ENCODE measurements at regions of chr3 and their contacts with region 1.

Region 1: GRCh38 chr3:150227839-150228238 is 180.3 kb upstream of the TSC22D2 start:
- DNase-seq: peak; percentile 54
- CTCF ChIP-seq: peak; percentile 57

Region 2: GRCh38 chr3:149245738-149246451 is 981.9 kb before region 1 on chr3:
- in situ Hi-C with region 1: no loop called
- DNase-seq: peak; percentile 34
- CTCF ChIP-seq: no peak

Region 3: DNA sequence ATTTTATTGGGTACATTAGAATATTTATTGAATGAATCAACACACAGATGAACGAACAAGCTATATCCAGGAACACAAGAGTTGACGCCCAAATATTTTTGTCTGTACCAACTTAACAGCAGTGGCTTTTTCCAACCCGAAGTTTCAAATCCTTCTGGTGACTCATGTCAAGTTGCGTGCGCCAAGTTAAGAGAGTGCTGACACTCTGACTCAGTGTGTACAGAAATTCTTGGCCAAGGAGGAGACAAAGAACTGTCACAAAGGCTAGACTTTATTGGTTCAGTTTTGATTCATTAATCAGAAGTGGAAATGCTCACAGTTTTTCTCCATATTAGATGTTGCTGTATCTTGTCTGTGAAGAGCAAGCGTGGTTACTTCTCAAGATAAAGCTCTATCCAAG is 120.7 kb after region 1 on chr3:
- in situ Hi-C with region 1: no loop called
- DNase-seq: no peak
- CTCF ChIP-seq: no peak

Region 4: GRCh38 chr3:150371741-150372254 is 144.0 kb after region 1 on chr3:
- in situ Hi-C with region 1: no loop called
- DNase-seq: no peak
- CTCF ChIP-seq: no peak

Region 5: DNA sequence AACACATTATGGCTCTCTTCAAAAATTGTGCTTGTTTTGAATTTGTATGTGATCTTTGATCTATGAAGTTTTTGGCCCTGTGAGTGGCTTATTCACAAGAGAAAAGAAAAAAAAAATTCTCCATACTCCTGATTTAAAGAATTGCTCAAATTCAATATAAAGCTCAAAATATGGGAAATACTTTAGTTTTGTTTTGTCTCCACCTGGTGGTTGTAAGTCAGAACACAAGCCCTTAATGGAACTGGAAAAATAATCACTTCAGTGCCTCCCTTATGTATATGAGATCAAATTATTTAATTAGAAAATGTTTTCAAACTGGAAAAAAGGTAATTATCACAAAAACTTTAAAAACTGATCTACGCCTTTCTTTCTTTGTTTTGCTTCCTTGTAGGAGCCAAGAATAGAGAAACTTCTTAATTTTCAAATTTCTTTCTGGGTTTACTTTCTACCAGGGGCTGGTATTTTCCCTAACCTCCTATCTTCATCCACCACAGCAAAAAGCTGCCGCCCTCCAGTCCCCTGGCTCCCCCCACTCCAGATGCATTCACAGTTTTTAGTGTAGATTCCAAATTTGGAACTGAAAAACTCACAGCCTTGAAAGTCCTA is 267.8 kb after region 1 on chr3:
- in situ Hi-C with region 1: loop called (anchors 10 kb)
- DNase-seq: peak; percentile 63
- CTCF ChIP-seq: peak; percentile 43

Measured in GM13976 (cell line).